ENCODE measurements at regions of chr2 and their contacts with region 1.

Region 1: DNA sequence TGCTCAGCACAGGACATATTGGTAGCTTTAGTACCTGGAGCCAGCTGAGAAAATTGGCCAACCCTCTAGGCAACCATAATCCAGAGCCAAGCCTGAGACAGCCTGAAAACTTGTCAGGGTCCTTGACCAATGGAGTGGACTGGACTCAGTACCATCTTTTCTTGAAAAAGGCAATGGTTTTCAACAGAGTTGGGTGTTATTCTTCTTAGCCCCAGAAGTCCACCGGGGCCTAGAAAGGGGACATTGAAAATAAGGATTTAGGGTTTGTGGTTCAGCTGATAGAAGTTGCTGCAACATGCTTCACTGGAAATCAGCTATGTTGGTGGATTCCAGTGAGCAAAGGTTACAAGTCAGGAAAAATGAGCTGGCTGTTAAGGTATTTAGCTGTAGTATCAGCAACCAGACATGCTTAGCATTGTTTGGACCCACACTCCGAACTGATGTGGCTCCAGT is 22.1 kb upstream of the CNOT11 start:
- DNase-seq: no peak
- H3K4me3 ChIP-seq: no peak overlapping the region
- H3K27ac ChIP-seq: no peak overlapping the region
- H3K4me1 ChIP-seq: no peaks in the 10 kb centered on the region
- H3K27me3 ChIP-seq: no peaks in the 10 kb centered on the region
- CTCF ChIP-seq: no peak
- EP300 ChIP-seq: no peak
- POLR2A ChIP-seq: no peak
- RAD21 ChIP-seq: no peak

Region 2: DNA sequence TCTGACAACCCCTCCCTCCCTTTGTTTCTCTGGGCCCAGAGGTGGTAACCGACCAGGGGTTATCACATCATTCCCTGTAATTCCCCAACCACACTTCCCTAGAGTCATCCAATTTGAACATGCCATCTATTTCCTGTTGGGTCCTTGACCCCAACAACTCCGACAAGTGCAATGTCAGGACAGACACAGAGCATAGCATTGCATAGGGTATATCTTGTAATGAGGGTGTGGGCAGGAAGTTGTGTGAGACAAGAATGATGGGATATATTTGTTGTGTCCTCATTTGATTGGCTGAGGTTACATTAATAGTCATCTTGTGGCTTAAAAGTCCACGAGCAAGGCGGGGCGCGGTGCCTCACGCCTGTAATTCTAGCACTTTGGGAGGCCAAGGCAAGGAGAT is 11.3 kb before region 1 on chr2:
- CTCF ChIA-PET with region 1: interaction called, 16 read pairs
- POLR2A ChIA-PET with region 1: no interaction called
- DNase-seq: no peak
- H3K4me3 ChIP-seq: no peak overlapping the region
- H3K27ac ChIP-seq: no peak overlapping the region
- H3K4me1 ChIP-seq: no peaks in the 10 kb centered on the region
- H3K27me3 ChIP-seq: no peaks in the 10 kb centered on the region
- CTCF ChIP-seq: no peak
- EP300 ChIP-seq: no peak
- POLR2A ChIP-seq: no peak
- RAD21 ChIP-seq: no peak

Measured in H1 (cell line).